ENCODE measurements at regions of chr10 and their contacts with region 1.

Region 1: GRCh38 chr10:51389415-51390321 is 309.7 kb downstream of the CSTF2T start:
- DNase-seq: peak; percentile 21
- ATAC-seq: no peak
- H3K4me3 ChIP-seq: no peak overlapping the region
- H3K4me3 Mint-ChIP-seq: no peak overlapping the region
- H3K27ac ChIP-seq: no peak overlapping the region
- H3K27ac Mint-ChIP-seq: no peak overlapping the region
- H3K4me1 ChIP-seq: no peaks in the 10 kb centered on the region
- H3K4me1 Mint-ChIP-seq: no peaks in the 10 kb centered on the region
- H3K27me3 ChIP-seq: no peaks in the 10 kb centered on the region
- H3K27me3 Mint-ChIP-seq: no peaks in the 10 kb centered on the region
- CTCF ChIP-seq: peak; percentile 67

Region 2: DNA sequence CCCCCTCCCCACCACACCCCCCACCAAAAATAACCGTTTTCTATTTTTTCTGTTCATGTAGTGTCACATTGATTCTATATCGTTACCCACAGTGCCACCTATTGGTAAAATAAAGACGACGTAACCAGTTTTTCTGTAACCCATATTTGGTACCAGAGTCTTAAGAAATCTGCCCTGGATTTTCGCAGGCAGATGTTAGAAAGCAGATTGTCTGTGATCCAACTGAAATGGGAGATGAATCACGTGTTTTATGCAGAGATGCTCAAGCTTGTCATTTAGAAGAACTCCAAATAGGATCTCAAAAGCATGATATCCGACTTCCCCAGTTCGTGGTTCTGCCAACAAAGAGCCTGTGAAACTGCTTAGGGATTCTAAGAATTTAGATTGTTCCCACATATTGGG is 570.8 kb after region 1 on chr10:
- CTCF ChIA-PET with region 1: interaction called, 33 read pairs
- POLR2A ChIA-PET with region 1: no interaction called
- intact Hi-C with region 1: no loop called
- DNase-seq: peak; percentile 22
- ATAC-seq: no peak
- H3K4me3 ChIP-seq: no peak overlapping the region
- H3K4me3 Mint-ChIP-seq: no peak overlapping the region
- H3K27ac ChIP-seq: no peak overlapping the region
- H3K27ac Mint-ChIP-seq: no peak overlapping the region
- H3K4me1 ChIP-seq: no peaks in the 10 kb centered on the region
- H3K4me1 Mint-ChIP-seq: no peaks in the 10 kb centered on the region
- H3K27me3 ChIP-seq: no peaks in the 10 kb centered on the region
- H3K27me3 Mint-ChIP-seq: peaks cover 17% of the 10 kb centered on the region
- CTCF ChIP-seq: peak; percentile 68

Measured in B cell (primary cell).